Heart right ventricle (tissue), 16 donors: ENCODE measurements at regions of chr5 and their contacts with region 1.

Region 1: DNA sequence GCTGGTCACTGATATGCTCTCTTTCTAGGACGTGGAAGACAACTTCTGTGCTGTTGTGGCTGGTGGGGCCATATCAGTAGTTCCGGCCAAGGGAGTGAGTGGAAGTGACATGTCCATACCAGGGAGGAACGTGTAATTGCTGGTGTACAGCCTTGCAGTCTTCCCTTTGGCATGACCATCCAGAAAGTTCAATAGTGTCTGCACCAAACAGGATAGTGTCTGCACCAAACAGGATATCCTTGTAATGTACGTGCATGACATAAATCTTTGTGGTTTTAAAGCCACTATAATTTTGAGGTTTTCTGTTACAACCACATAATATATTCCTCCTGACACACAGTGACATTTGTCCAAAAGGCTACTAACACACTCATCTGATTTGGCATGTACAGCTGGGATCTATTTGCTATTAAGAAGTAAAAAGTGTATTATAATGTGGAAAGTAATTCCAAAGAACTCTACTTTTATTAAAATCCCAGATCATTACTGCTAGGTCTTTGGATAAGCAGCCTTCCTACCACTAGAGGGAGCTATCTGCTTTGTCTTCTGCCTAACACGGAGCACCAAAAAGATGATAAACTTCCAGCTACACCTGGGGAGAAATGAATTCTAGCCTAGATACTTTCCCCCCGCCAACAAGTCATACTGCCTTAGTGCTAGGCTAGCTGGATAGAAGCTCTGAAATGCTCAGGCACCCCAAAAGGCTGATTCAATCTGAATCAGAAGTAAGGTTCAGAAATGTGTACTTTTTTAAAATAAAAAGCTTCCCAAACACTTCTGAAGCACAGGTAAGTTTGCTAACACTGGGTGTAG is 52.7 kb downstream of the RNF145 start:
- DNase-seq: peak in 1 of 2 donors; percentile 61
- ATAC-seq: peak; percentile 64 to 89 (median 82)
- H3K4me3 ChIP-seq: no peak overlapping the region
- H3K27ac ChIP-seq: no peak overlapping the region
- H3K4me1 ChIP-seq: peaks cover 0 to 10% (median 5%) of the 10 kb centered on the region in 9 donors
- H3K27me3 ChIP-seq: no peaks in the 10 kb centered on the region
- CTCF ChIP-seq: peak; percentile 83 to 92 (median 87)

Region 2: GRCh38 chr5:159094745-159095144 is 61.9 kb before region 1 on chr5:
- intact Hi-C with region 1: no loop called
- DNase-seq: peak; percentile 54 to 83
- ATAC-seq: peak in 2 of 8 donors; percentile 27 to 37
- H3K4me3 ChIP-seq: peak overlapping the region in 9 of 10 donors; percentile 11 to 78 (median 64)
- H3K27ac ChIP-seq: peak overlapping the region; percentile 1 to 96 (median 91)
- H3K4me1 ChIP-seq: peaks cover 0 to 79% (median 43%) of the 10 kb centered on the region in 9 donors
- H3K27me3 ChIP-seq: peaks cover 0 to 53% (median 19%) of the 10 kb centered on the region in 7 donors
- CTCF ChIP-seq: no peak

Region 3: DNA sequence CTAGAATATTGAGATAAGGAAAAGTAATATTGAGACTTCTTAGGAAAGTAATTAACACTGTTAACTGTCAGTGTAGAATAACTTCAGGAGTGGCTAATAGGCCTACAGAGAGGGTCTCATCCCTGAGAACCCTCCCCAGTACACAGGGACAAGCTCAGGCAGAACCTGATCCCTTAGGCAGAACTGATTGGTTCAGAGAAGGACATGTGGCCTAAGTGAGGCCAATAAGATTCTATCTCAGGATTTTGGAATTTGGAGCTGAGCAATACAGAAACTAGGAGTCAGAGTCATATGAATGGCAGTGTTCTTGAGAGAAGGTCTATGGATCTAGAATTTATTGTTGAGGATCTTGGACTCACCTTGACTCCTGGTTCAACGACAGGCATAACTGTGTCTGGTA is 95.6 kb after region 1 on chr5:
- intact Hi-C with region 1: no loop called
- DNase-seq: no peak
- ATAC-seq: no peak
- H3K4me3 ChIP-seq: no peak overlapping the region
- H3K27ac ChIP-seq: no peak overlapping the region
- H3K4me1 ChIP-seq: no peaks in the 10 kb centered on the region
- H3K27me3 ChIP-seq: peaks cover 0 to 28% (median 5%) of the 10 kb centered on the region in 7 donors
- CTCF ChIP-seq: no peak

Region 4: GRCh38 chr5:159262859-159263567 is 106.4 kb after region 1 on chr5 and contains the start of gene UBLCP1:
- intact Hi-C with region 1: loop called in 8 of 10 experiments (anchors 2 to 10 kb)
- DNase-seq: peak; percentile 79 to 85
- ATAC-seq: peak; percentile 93 to 96 (median 95)
- H3K4me3 ChIP-seq: peak within 1 kb of the TSS; percentile 66 to 98 (median 90)
- H3K27ac ChIP-seq: peak within 1 kb of the TSS; percentile 72 to 98 (median 88)
- H3K4me1 ChIP-seq: peaks cover 4 to 25% (median 21%) of the 10 kb centered on the region in 9 donors
- H3K27me3 ChIP-seq: no peaks in the 10 kb centered on the region
- CTCF ChIP-seq: peak in 1 of 9 donors; percentile 5
- total RNA-seq, gene UBLCP1: 11.6 to 17.0 (median 13.9) TPM

Region 5: DNA sequence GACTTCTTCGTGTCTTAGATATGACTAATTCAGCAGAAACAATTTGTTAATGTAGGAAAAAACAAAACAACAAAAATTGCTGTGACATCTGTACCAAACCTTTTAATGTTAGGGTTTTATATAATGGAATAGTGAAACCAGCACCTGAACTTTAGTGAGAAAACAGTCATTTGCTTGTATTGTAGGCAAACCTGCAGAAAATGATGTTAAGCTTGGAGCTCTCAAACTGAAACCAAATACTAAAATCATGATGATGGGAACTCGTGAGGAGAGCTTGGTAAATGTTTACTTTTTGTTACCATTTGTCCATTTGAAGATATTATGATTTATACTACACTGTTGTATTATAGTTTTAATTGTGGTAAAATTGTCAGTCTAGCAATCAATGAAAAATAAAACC is 113.1 kb after region 1 on chr5:
- intact Hi-C with region 1: loop called in 4 of 10 experiments (anchors 5 to 10 kb)
- DNase-seq: no peak
- ATAC-seq: no peak
- H3K4me3 ChIP-seq: no peak overlapping the region
- H3K27ac ChIP-seq: no peak overlapping the region
- H3K4me1 ChIP-seq: peaks cover 0 to 8% (median under 1%) of the 10 kb centered on the region in 9 donors
- H3K27me3 ChIP-seq: no peaks in the 10 kb centered on the region
- CTCF ChIP-seq: no peak

Region 6: GRCh38 chr5:159316519-159317383 is 160.1 kb after region 1 on chr5:
- intact Hi-C with region 1: loop called in 7 of 10 experiments (anchors 2 to 10 kb)
- DNase-seq: peak in 1 of 2 donors; percentile 19
- ATAC-seq: peak in 1 of 8 donors; percentile 69
- H3K4me3 ChIP-seq: no peak overlapping the region
- H3K27ac ChIP-seq: no peak overlapping the region
- H3K4me1 ChIP-seq: no peaks in the 10 kb centered on the region
- H3K27me3 ChIP-seq: peaks cover 0 to 22% (median 13%) of the 10 kb centered on the region in 7 donors
- CTCF ChIP-seq: peak; percentile 15 to 63 (median 55)